Calu3 (cell line): ENCODE measurements at regions of chr2 and their contacts with region 1.

Region 1: GRCh38 chr2:36461039-36461681 is 105.6 kb downstream of the CRIM1 start:
- DNase-seq: no peak
- H3K4me3 Mint-ChIP-seq: no peak overlapping the region
- H3K27ac Mint-ChIP-seq: no peak overlapping the region
- H3K4me1 Mint-ChIP-seq: peaks cover 16% of the 10 kb centered on the region
- H3K27me3 Mint-ChIP-seq: no peaks in the 10 kb centered on the region
- CTCF ChIP-seq: no peak

Region 2: GRCh38 chr2:36367895-36368353 is 93.2 kb before region 1 on chr2:
- CTCF ChIA-PET with region 1: interaction called, 14 read pairs
- intact Hi-C with region 1: no loop called
- DNase-seq: peak; percentile 9
- H3K4me3 Mint-ChIP-seq: peak overlapping the region; percentile 54
- H3K27ac Mint-ChIP-seq: peak overlapping the region; percentile 16
- H3K4me1 Mint-ChIP-seq: peaks cover 67% of the 10 kb centered on the region
- H3K27me3 Mint-ChIP-seq: no peaks in the 10 kb centered on the region
- CTCF ChIP-seq: no peak

Region 3: DNA sequence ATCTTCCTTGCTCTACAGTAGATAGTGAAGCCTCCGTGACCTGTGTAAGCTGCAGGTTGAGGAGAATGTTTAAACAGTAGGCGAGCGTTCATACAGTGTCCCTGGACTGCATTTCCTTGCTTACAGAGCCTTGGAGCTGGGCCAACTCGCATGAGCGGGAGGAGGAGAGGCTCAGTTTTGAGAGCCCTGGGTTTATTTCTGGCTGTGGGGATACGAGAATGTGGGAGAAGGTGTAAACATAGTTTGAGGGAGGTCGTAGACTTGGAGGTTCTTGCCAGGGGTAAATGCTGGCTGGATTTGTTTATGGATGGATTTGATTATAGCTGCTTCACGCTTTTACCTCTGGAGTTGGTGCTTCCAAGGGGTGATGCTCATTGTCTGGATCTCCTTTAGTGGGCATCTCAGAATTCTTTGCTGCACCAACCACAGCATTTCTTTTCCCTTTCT is 84.8 kb before region 1 on chr2:
- CTCF ChIA-PET with region 1: interaction called, 12 read pairs
- intact Hi-C with region 1: no loop called
- DNase-seq: peak; percentile 66
- H3K4me3 Mint-ChIP-seq: peak overlapping the region; percentile 66
- H3K27ac Mint-ChIP-seq: peak overlapping the region; percentile 86
- H3K4me1 Mint-ChIP-seq: peaks cover 72% of the 10 kb centered on the region
- H3K27me3 Mint-ChIP-seq: no peaks in the 10 kb centered on the region
- CTCF ChIP-seq: no peak

Region 4: GRCh38 chr2:36507408-36507812 is 46.2 kb after region 1 on chr2:
- CTCF ChIA-PET with region 1: interaction called, 9 read pairs
- intact Hi-C with region 1: loop called (anchors 1 kb)
- DNase-seq: peak; percentile 72
- H3K4me3 Mint-ChIP-seq: no peak overlapping the region
- H3K27ac Mint-ChIP-seq: no peak overlapping the region
- H3K4me1 Mint-ChIP-seq: peaks cover 10% of the 10 kb centered on the region
- H3K27me3 Mint-ChIP-seq: no peaks in the 10 kb centered on the region
- CTCF ChIP-seq: peak; percentile 57